Activated CD4-positive, alpha-beta T cell treated with anti-CD3 and anti-CD28 coated beads for 36 hours (primary cell): ENCODE measurements at regions of chr2 and their contacts with region 1.

Region 1: GRCh38 chr2:25376750-25377621 is 35.3 kb upstream of the DNMT3A start:
- DNase-seq: peak; percentile 96
- ATAC-seq: peak; percentile 98
- H3K4me3 Mint-ChIP-seq: peak overlapping the region; percentile 69
- H3K27ac Mint-ChIP-seq: peak overlapping the region; percentile 92
- H3K4me1 Mint-ChIP-seq: peaks cover 42% of the 10 kb centered on the region
- H3K27me3 Mint-ChIP-seq: no peaks in the 10 kb centered on the region

Region 2: GRCh38 chr2:25276569-25277465 is 100.2 kb before region 1 on chr2:
- CTCF ChIA-PET with region 1: interaction called, 6 read pairs
- POLR2A ChIA-PET with region 1: no interaction called
- intact Hi-C with region 1: loop called in 1 of 2 experiments (anchors 1 kb)
- DNase-seq: peak; percentile 90
- ATAC-seq: peak; percentile 65
- H3K4me3 Mint-ChIP-seq: peak overlapping the region; percentile 9
- H3K27ac Mint-ChIP-seq: peak overlapping the region; percentile 90
- H3K4me1 Mint-ChIP-seq: peaks cover 70% of the 10 kb centered on the region
- H3K27me3 Mint-ChIP-seq: no peaks in the 10 kb centered on the region

Region 3: GRCh38 chr2:25342372-25343186 is 34.4 kb before region 1 on chr2:
- CTCF ChIA-PET with region 1: interaction called, 3 read pairs
- POLR2A ChIA-PET with region 1: no interaction called
- intact Hi-C with region 1: loop called (anchors 1 kb)
- DNase-seq: peak; percentile 90
- ATAC-seq: peak; percentile 80
- H3K4me3 Mint-ChIP-seq: peak overlapping the region; percentile 75
- H3K27ac Mint-ChIP-seq: no peak overlapping the region
- H3K4me1 Mint-ChIP-seq: peaks cover 39% of the 10 kb centered on the region
- H3K27me3 Mint-ChIP-seq: no peaks in the 10 kb centered on the region

Region 4: GRCh38 chr2:25386971-25387875 is 10.2 kb after region 1 on chr2:
- CTCF ChIA-PET with region 1: interaction called, 16 read pairs
- POLR2A ChIA-PET with region 1: no interaction called
- intact Hi-C with region 1: no loop called
- DNase-seq: no peak
- ATAC-seq: no peak
- H3K4me3 Mint-ChIP-seq: no peak overlapping the region
- H3K27ac Mint-ChIP-seq: no peak overlapping the region
- H3K4me1 Mint-ChIP-seq: peaks cover 13% of the 10 kb centered on the region
- H3K27me3 Mint-ChIP-seq: no peaks in the 10 kb centered on the region

Region 5: GRCh38 chr2:25483601-25484266 is 106.7 kb after region 1 on chr2:
- CTCF ChIA-PET with region 1: no interaction called
- POLR2A ChIA-PET with region 1: no interaction called
- intact Hi-C with region 1: no loop called
- DNase-seq: no peak
- ATAC-seq: peak; percentile 16
- H3K4me3 Mint-ChIP-seq: no peak overlapping the region
- H3K27ac Mint-ChIP-seq: peak overlapping the region; percentile 10
- H3K4me1 Mint-ChIP-seq: peaks cover 3% of the 10 kb centered on the region
- H3K27me3 Mint-ChIP-seq: no peaks in the 10 kb centered on the region

Region 6: GRCh38 chr2:25521665-25522387 is 144.8 kb after region 1 on chr2:
- CTCF ChIA-PET with region 1: interaction called, 4 read pairs
- POLR2A ChIA-PET with region 1: interaction called, 4 read pairs
- intact Hi-C with region 1: loop called (anchors 1 to 5 kb)
- DNase-seq: peak; percentile 34
- ATAC-seq: peak; percentile 98
- H3K4me3 Mint-ChIP-seq: peak overlapping the region; percentile 24
- H3K27ac Mint-ChIP-seq: peak overlapping the region; percentile 77
- H3K4me1 Mint-ChIP-seq: peaks cover 7% of the 10 kb centered on the region
- H3K27me3 Mint-ChIP-seq: no peaks in the 10 kb centered on the region

Region 7: DNA sequence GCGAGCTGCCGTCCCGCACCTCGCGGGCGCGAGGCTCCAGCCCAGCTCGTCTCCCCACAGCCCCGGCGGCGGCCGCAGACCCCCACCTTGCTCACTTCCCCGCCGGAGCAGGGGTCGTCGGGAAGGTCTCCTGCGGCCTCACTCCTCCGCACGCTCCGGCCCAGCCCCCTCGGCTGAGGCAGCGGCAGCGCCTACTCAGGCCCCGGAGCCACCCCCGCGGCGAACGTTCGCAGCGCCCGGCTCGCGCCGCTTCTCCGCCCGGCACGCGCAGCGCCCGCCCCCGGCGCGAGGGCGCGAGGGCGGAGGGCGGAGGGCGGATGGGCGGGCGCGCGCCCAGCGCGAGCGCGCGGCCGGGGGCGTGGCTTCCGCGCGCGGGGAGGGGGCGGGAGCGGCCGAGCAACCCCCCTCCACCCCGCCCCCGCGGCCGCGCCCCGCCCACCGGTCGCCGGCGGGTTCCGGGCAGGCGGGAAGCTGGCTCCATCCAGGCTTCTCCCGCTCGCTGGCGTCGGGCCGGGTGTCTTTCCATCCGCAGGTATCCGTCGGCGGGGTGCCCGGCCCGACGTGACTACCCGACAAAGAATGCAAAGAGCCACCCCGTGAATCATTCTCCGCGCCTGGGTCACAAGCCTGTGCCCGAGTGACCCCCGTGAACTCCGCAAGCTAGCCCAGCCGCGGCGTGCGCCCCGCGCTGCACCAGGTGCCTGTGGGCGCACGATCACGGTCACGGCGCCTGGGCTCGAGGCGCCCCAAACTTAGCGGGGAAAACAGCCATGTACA is 296.5 kb after region 1 on chr2 and contains the start of gene DTNB:
- CTCF ChIA-PET with region 1: no interaction called
- POLR2A ChIA-PET with region 1: no interaction called
- intact Hi-C with region 1: loop called in 1 of 2 experiments (anchors 1 kb)
- DNase-seq: peak; percentile 86
- ATAC-seq: peak; percentile 74
- H3K4me3 Mint-ChIP-seq: peak within 1 kb of the TSS; percentile 79
- H3K27ac Mint-ChIP-seq: peak within 1 kb of the TSS; percentile 76
- H3K4me1 Mint-ChIP-seq: peaks cover 31% of the 10 kb centered on the region
- H3K27me3 Mint-ChIP-seq: peaks cover 11% of the 10 kb centered on the region
- total RNA-seq, gene DTNB: 17.1 to 33.5 TPM